SK-N-SH (cell line): ENCODE measurements at regions of chr11 and their contacts with region 1.

Region 1: DNA sequence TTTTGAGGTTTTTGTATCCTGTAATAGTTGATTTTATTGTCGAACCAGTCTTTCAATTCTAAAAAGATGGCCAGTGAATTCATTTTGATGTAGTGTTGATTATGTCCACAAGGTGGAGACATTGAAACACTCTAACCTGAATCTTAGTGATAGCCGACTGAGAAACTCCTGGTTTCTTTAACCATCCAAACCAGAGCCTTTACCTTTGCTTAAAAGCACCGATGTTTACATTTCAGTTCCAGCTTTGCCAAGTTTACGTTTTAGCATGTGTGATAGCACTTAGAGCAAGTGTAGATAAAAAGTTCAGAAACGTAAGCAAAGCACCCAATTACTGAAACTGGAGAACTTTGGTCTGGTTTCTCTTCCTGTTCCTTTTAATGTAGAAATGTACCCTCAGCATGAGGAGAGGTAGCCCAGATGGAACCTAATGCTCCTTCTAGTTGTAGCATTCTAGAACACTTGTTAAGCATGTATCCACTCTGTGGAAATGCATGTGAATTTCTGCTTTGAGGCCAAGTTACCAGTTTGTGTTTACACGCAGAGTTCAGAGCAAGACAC is 208.6 kb downstream of the DBX1 start:
- DNase-seq: peak; percentile 42
- H3K4me3 ChIP-seq: no peak overlapping the region; a peak in 1 of 4 replicates
- H3K27ac ChIP-seq: peak overlapping the region; percentile 83 to 91
- H3K4me1 ChIP-seq: peaks cover 45 to 49% of the 10 kb centered on the region in 2 experiments
- H3K27me3 ChIP-seq: no peaks in the 10 kb centered on the region
- CTCF ChIP-seq: peak; percentile 72
- EP300 ChIP-seq: no peak
- RAD21 ChIP-seq: peak; percentile 77

Region 2: DNA sequence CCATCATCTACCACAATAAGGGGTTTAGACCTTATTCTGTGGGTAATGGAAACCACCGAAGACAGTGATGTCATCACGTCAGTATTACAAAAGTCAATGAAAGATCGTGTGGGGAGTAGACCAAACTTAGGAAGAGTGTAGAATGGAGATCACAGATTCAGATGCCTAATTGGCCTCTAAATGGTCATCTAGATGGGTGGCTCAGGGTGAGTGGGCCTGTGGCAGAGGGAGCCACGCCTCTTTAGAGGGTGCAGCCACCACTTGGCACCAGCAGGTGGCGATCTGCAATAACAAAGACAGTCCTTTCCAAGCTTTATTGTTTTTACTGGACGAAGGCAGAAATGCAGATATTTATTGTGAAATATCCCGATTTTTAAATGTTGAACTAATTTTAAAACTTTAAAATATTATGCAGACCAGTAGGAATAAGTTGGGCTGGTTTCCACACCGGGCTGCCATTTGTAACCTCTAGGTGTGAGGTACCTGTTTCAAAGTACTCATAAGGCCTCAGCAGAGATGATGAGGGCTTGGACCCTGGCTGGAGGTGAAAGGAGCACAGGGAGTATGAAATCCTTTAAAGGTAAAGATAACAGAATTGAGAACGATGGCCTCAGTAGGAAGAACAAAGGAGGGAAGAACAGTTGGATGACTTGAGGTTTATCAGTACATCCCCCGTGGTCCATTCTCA is 13.3 kb before region 1 on chr11:
- CTCF ChIA-PET with region 1: interaction called, 12 read pairs
- POLR2A ChIA-PET with region 1: no interaction called
- DNase-seq: peak; percentile 77
- H3K4me3 ChIP-seq: peak overlapping the region in 1 of 2 experiments; percentile 31; a peak in 1 of 4 replicates
- H3K27ac ChIP-seq: peak overlapping the region; percentile 28 to 93
- H3K4me1 ChIP-seq: peaks cover 22 to 36% of the 10 kb centered on the region in 2 experiments
- H3K27me3 ChIP-seq: no peaks in the 10 kb centered on the region
- CTCF ChIP-seq: peak; percentile 96
- EP300 ChIP-seq: no peak
- RAD21 ChIP-seq: peak; percentile 69

Region 3: DNA sequence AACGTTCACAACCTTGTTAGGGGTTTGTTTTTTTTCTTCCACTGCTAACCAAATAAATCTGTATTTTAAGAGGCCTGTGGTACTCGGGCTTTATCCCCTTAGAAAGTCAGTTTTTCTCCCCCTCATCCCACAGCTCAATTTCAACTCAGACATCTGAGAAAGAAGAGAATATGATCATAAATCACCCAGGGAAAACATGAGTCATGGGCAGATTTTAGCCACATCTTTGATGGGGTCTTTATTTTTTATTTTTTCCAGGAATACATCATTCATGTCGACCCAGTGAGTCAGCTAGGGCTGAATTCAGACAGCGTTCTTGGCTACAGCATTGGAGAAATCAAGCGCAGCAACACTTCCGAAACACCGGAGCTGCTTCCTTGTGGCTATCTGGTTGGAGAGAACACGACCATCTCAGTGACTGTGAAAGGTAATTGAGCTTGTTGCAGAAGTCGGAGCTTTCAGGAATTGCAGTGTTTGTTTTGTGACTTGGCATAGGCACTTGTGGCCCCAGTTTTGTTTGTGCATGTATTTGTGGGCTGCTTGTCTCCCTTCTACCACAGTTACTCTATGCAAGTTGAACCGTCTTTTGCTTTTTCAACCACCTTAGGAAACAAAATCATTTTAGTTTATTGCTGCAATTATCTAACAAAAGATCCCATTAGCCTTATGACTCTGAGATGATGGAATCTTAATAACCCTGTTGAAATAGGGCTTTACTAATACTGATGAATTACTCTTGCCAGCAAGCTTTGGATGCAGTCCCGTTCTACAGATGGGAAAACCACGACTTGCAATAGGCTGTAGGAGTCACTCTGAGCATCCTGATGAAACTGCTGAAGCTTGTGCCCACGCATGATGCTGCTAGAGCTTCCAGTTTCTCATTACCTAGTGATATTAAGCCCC is 145.9 kb after region 1 on chr11:
- CTCF ChIA-PET with region 1: interaction called, 13 read pairs
- POLR2A ChIA-PET with region 1: no interaction called
- DNase-seq: no peak
- H3K4me3 ChIP-seq: no peak overlapping the region; a peak in 2 of 4 replicates
- H3K27ac ChIP-seq: peak overlapping the region; percentile 87 to 100
- H3K4me1 ChIP-seq: peaks cover 8 to 20% of the 10 kb centered on the region in 2 experiments
- H3K27me3 ChIP-seq: no peaks in the 10 kb centered on the region
- CTCF ChIP-seq: no peak
- EP300 ChIP-seq: peak in 1 of 2 experiments; percentile 97; a peak in 3 of 4 replicates
- RAD21 ChIP-seq: no peak